ENCODE measurements at regions of chr18 and their contacts with region 1.

Region 1: DNA sequence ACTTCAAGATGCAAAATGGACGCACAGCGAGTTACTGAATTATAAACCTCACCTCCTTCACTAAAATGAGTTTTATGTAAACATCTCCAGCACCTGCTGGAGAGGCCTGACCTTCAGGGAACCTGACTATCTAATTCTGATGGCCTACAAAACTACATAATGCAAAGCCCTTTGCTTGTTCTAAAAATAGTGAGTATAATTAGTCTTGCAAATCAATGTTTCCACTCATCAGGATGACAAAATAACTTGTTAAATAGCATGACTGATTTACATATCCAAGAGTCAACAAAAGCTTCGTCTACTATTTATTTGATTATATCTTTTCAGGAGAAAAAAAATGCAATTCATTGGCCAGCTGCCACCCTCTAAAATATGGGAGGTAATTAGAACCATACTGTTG is 326.3 kb upstream of the MC4R start:
- DNase-seq: no peak
- ATAC-seq: no peak
- H3K4me3 ChIP-seq: no peak overlapping the region
- H3K27ac ChIP-seq: no peak overlapping the region
- H3K4me1 ChIP-seq: no peaks in the 10 kb centered on the region
- H3K27me3 ChIP-seq: no peaks in the 10 kb centered on the region
- CTCF ChIP-seq: no peak
- POLR2A ChIP-seq: no peak
- RAD21 ChIP-seq: no peak

Region 2: DNA sequence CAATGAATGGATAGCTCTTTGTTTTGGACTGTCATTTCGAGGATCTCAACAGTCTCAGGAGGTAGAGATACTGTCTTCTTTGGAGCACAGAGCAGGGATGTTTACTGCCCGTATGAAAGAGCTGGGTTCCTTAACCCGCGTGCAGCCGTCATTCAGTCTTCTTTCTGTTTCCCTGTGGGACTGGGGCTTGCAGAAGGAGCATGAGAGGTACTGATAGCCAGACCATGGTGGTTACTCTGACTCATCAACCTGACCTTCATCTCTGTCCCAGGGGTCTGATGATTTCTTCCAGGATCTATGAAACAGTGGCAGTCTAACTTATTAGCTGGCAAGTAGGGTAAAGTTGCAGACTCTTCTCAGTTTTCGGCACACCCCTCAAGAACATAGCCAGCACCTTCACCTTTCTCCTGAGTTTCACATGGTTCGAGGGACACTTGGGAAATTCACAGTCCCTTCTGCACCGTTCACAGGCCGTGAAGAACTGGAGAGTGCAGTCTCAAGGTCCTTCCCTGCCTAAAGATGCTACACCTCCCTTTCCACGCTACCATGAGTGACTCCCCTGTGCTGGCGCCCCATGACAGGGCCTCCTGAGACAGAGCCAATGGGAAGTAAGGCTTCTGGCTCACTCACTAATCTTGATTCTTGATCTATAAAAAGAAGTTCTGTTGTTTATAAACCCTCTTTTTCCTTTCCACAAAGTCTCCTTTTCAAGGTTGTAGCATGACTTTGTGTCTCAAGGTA is 552.5 kb before region 1 on chr18:
- CTCF ChIA-PET with region 1: no interaction called
- POLR2A ChIA-PET with region 1: no interaction called
- dilution Hi-C with region 1: no loop called
- in situ Hi-C with region 1: no loop called
- intact Hi-C with region 1: no loop called
- DNase-seq: no peak
- ATAC-seq: no peak
- H3K4me3 ChIP-seq: no peak overlapping the region
- H3K27ac ChIP-seq: no peak overlapping the region
- H3K4me1 ChIP-seq: no peaks in the 10 kb centered on the region
- H3K27me3 ChIP-seq: no peaks in the 10 kb centered on the region
- CTCF ChIP-seq: no peak
- POLR2A ChIP-seq: no peak
- RAD21 ChIP-seq: no peak

Region 3: GRCh38 chr18:60676815-60677214 is 22.1 kb before region 1 on chr18:
- CTCF ChIA-PET with region 1: no interaction called
- POLR2A ChIA-PET with region 1: no interaction called
- dilution Hi-C with region 1: no loop called
- in situ Hi-C with region 1: no loop called
- intact Hi-C with region 1: loop called (anchors 1 kb)
- DNase-seq: no peak
- ATAC-seq: no peak
- H3K4me3 ChIP-seq: no peak overlapping the region
- H3K27ac ChIP-seq: no peak overlapping the region
- H3K4me1 ChIP-seq: no peaks in the 10 kb centered on the region
- H3K27me3 ChIP-seq: no peaks in the 10 kb centered on the region
- CTCF ChIP-seq: no peak
- POLR2A ChIP-seq: no peak
- RAD21 ChIP-seq: no peak

Measured in IMR-90 (cell line).